ENCODE measurements at regions of chrX and their contacts with region 1.

Region 1: GRCh38 chrX:124863303-124863702 is 456.4 kb upstream of the TEX13C start:
- DNase-seq: no peak
- ATAC-seq: no peak
- H3K4me3 ChIP-seq: no peak overlapping the region
- H3K4me3 Mint-ChIP-seq: no peak overlapping the region
- H3K27ac ChIP-seq: no peak overlapping the region
- H3K27ac Mint-ChIP-seq: no peak overlapping the region
- H3K4me1 ChIP-seq: no peaks in the 10 kb centered on the region
- H3K4me1 Mint-ChIP-seq: no peaks in the 10 kb centered on the region
- H3K27me3 ChIP-seq: no peaks in the 10 kb centered on the region
- H3K27me3 Mint-ChIP-seq: peaks cover 2% of the 10 kb centered on the region
- CTCF ChIP-seq: no peak

Region 2: DNA sequence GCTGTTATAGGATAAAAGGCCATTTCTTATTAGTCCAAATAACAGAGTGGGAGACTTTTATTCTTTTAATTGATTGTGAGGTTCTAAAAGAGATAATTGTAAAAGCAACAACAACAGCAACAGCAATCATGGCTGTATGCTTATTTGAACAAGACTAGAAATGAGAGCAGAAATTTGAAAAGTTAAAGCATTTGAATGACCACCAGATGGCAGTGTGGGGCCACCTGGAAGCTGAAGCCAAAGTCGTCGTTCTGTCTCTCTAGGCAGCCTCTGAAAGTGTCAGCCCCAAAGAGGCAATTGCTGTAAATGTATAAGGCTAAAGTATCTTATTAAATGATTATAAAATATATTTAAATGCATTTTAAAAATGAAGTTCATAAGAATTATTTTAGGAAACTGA is 474.7 kb before region 1 on chrX:
- CTCF ChIA-PET with region 1: no interaction called
- POLR2A ChIA-PET with region 1: no interaction called
- intact Hi-C with region 1: loop called in 1 of 2 experiments (anchors 5 kb)
- DNase-seq: peak; percentile 3 to 77 (median 56)
- ATAC-seq: peak; percentile 67
- H3K4me3 ChIP-seq: no peak overlapping the region
- H3K4me3 Mint-ChIP-seq: no peak overlapping the region
- H3K27ac ChIP-seq: no peak overlapping the region
- H3K27ac Mint-ChIP-seq: no peak overlapping the region
- H3K4me1 ChIP-seq: no peaks in the 10 kb centered on the region
- H3K4me1 Mint-ChIP-seq: peaks cover 9% of the 10 kb centered on the region
- H3K27me3 ChIP-seq: no peaks in the 10 kb centered on the region
- H3K27me3 Mint-ChIP-seq: no peaks in the 10 kb centered on the region
- CTCF ChIP-seq: peak; percentile 65

Region 3: GRCh38 chrX:124406294-124407014 is 456.8 kb before region 1 on chrX:
- CTCF ChIA-PET with region 1: interaction called, 3 read pairs
- POLR2A ChIA-PET with region 1: no interaction called
- intact Hi-C with region 1: loop called (anchors 5 to 10 kb)
- DNase-seq: peak; percentile 2 to 69 (median 54)
- ATAC-seq: peak; percentile 58
- H3K4me3 ChIP-seq: no peak overlapping the region
- H3K4me3 Mint-ChIP-seq: no peak overlapping the region
- H3K27ac ChIP-seq: no peak overlapping the region
- H3K27ac Mint-ChIP-seq: no peak overlapping the region
- H3K4me1 ChIP-seq: no peaks in the 10 kb centered on the region
- H3K4me1 Mint-ChIP-seq: peaks cover 9% of the 10 kb centered on the region
- H3K27me3 ChIP-seq: no peaks in the 10 kb centered on the region
- H3K27me3 Mint-ChIP-seq: no peaks in the 10 kb centered on the region
- CTCF ChIP-seq: no peak

Region 4: DNA sequence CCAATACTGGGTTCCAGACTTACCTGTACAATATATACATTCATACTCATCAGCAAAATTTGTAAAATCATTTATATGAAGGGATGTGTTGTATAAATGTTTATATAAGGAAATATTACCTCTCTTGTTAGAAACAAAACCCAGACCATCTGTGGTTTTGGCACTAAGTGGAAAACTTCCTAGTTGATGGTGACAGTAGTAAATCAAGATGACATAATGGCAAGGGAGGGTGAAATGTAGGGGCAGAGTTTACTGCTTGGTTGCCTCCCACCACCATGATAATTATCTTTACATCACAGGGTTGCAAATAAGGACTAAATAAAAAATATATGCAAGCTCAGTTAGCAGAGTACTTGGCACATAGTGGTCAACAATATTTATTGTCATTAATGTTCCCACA is 91.1 kb after region 1 on chrX:
- CTCF ChIA-PET with region 1: no interaction called
- POLR2A ChIA-PET with region 1: no interaction called
- intact Hi-C with region 1: no loop called
- DNase-seq: no peak
- ATAC-seq: no peak
- H3K4me3 ChIP-seq: no peak overlapping the region
- H3K4me3 Mint-ChIP-seq: no peak overlapping the region
- H3K27ac ChIP-seq: no peak overlapping the region
- H3K27ac Mint-ChIP-seq: no peak overlapping the region
- H3K4me1 ChIP-seq: no peaks in the 10 kb centered on the region
- H3K4me1 Mint-ChIP-seq: no peaks in the 10 kb centered on the region
- H3K27me3 ChIP-seq: no peaks in the 10 kb centered on the region
- H3K27me3 Mint-ChIP-seq: no peaks in the 10 kb centered on the region
- CTCF ChIP-seq: no peak

Measured in CD8-positive, alpha-beta T cell (primary cell).